GM12878 (cell line): ENCODE measurements at regions of chr6 and their contacts with region 1.

Region 1: DNA sequence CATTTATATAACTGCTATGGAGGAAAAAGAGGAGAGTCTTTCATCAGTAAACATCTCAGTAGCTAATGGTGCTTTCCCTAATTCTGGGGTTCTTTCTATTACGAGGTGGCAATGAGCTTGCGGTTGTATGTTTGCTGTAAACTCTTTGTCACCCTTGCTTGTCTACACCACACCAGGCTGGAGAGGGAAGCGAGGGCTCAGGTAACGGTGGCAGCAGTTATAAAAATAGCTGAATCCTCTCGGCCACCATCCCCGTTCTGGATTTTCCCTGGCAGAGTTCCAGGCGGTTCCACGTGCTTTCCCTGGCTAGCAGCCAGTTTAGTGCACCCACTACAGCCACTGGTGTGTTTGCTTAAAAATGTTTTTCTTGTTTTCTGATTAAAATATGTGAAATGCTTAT is 39.0 kb downstream of the MAS1 start:
- DNase-seq: peak; percentile 73
- ATAC-seq: peak; percentile 81
- H3K4me3 ChIP-seq: no peak overlapping the region
- H3K27ac ChIP-seq: peak overlapping the region; percentile 77
- H3K4me1 ChIP-seq: peaks cover 25% of the 10 kb centered on the region
- H3K27me3 ChIP-seq: no peaks in the 10 kb centered on the region
- CTCF ChIP-seq: no peak
- EP300 ChIP-seq: peak; percentile 61 to 90; a peak in 2 of 4 replicates
- POLR2A ChIP-seq: no peak
- RAD21 ChIP-seq: no peak

Region 2: DNA sequence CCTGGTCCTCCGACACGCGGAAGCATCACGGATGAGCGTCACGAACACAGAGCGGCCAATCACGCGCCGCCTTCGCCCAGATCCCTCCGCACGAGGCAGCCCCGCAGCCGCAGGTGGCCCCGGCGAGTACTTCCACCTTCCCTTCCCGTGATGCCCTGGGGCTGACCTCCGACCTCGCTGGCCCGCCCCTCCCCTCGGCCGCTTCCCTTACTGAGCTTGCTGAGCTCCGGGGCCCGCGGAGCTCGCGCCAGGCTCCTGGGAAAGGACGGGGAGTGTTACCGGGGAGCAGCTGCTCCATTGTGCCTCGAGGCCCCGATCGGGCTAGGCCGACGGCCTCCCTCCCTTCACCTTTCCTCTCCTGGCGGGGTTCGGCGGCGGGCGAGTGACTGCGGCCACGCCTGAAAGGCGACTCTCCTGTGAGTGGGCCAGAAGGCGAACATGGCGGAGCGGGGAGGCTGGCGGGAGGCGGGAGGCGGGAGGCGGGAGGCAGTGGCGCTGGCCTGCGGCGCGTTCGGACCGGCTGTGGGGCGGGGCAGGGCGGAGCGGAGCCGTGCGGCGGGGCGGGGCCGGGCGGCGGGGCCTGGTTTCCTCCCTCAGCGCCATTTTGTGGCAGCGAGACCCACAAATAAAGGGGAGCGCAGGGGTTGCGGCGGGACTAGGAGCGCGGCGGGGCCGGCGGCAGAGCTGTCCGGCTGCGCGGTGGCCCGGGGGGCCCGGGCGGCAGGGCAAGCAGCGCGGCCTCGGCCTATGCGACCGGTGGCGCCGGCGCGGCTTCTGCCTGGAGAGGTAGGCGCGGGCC is 202.7 kb before region 1 on chr6 and contains the start of gene WTAP:
- CTCF ChIA-PET with region 1: interaction called, 3 read pairs
- POLR2A ChIA-PET with region 1: interaction called, 7 read pairs
- RAD21 ChIA-PET with region 1: interaction called, 8 read pairs
- SMC1A ChIA-PET with region 1: interaction called, 3 read pairs
- in situ Hi-C with region 1: no loop called
- intact Hi-C with region 1: loop called (anchors 5 kb)
- DNase-seq: peak; percentile 89
- ATAC-seq: peak; percentile 86
- H3K4me3 ChIP-seq: peak within 1 kb of the TSS; percentile 91
- H3K27ac ChIP-seq: peak within 1 kb of the TSS; percentile 97
- H3K4me1 ChIP-seq: no peaks in the 10 kb centered on the region
- H3K27me3 ChIP-seq: no peaks in the 10 kb centered on the region
- CTCF ChIP-seq: no peak
- EP300 ChIP-seq: no peak
- POLR2A ChIP-seq: peak; percentile 95
- RAD21 ChIP-seq: no peak
- polyA plus RNA-seq, gene WTAP: 102 to 132 TPM

Region 3: GRCh38 chr6:159862103-159862502 is 67.7 kb before region 1 on chr6:
- CTCF ChIA-PET with region 1: interaction called, 11 read pairs
- POLR2A ChIA-PET with region 1: no interaction called
- RAD21 ChIA-PET with region 1: interaction called, 34 read pairs
- SMC1A ChIA-PET with region 1: interaction called, 36 read pairs
- in situ Hi-C with region 1: no loop called
- intact Hi-C with region 1: no loop called
- DNase-seq: no peak
- ATAC-seq: no peak
- H3K4me3 ChIP-seq: no peak overlapping the region
- H3K27ac ChIP-seq: no peak overlapping the region
- H3K4me1 ChIP-seq: no peaks in the 10 kb centered on the region
- H3K27me3 ChIP-seq: no peaks in the 10 kb centered on the region; a peak in 1 of 4 replicates
- CTCF ChIP-seq: no peak
- EP300 ChIP-seq: no peak
- POLR2A ChIP-seq: no peak
- RAD21 ChIP-seq: no peak

Region 4: GRCh38 chr6:159899994-159900745 is 29.6 kb before region 1 on chr6:
- CTCF ChIA-PET with region 1: interaction called, 3 read pairs
- POLR2A ChIA-PET with region 1: interaction called, 4 read pairs
- RAD21 ChIA-PET with region 1: interaction called, 5 read pairs
- SMC1A ChIA-PET with region 1: interaction called, 15 read pairs
- in situ Hi-C with region 1: no loop called
- intact Hi-C with region 1: loop called (anchors 2 kb)
- DNase-seq: no peak
- ATAC-seq: no peak
- H3K4me3 ChIP-seq: no peak overlapping the region
- H3K27ac ChIP-seq: no peak overlapping the region
- H3K4me1 ChIP-seq: peaks cover 13% of the 10 kb centered on the region
- H3K27me3 ChIP-seq: no peaks in the 10 kb centered on the region
- CTCF ChIP-seq: no peak
- EP300 ChIP-seq: no peak; a peak in 1 of 4 replicates
- POLR2A ChIP-seq: no peak
- RAD21 ChIP-seq: no peak

Region 5: GRCh38 chr6:159941286-159942113 is 11.7 kb after region 1 on chr6:
- CTCF ChIA-PET with region 1: interaction called, 11 read pairs
- POLR2A ChIA-PET with region 1: interaction called, 5 read pairs
- RAD21 ChIA-PET with region 1: interaction called, 9 read pairs
- SMC1A ChIA-PET with region 1: interaction called, 42 read pairs
- in situ Hi-C with region 1: no loop called
- intact Hi-C with region 1: no loop called
- DNase-seq: peak; percentile 55
- ATAC-seq: peak; percentile 98
- H3K4me3 ChIP-seq: no peak overlapping the region
- H3K27ac ChIP-seq: no peak overlapping the region
- H3K4me1 ChIP-seq: no peaks in the 10 kb centered on the region
- H3K27me3 ChIP-seq: no peaks in the 10 kb centered on the region
- CTCF ChIP-seq: peak; percentile 47 to 81 (median 56); a peak in 4 of 6 replicates
- EP300 ChIP-seq: no peak
- POLR2A ChIP-seq: no peak
- RAD21 ChIP-seq: peak; percentile 89

Region 6: GRCh38 chr6:159979136-159979874 is 49.5 kb after region 1 on chr6:
- CTCF ChIA-PET with region 1: interaction called, 7 read pairs
- POLR2A ChIA-PET with region 1: interaction called, 14 read pairs
- RAD21 ChIA-PET with region 1: interaction called, 29 read pairs
- SMC1A ChIA-PET with region 1: interaction called, 95 read pairs
- in situ Hi-C with region 1: no loop called
- intact Hi-C with region 1: no loop called
- DNase-seq: peak; percentile 75
- ATAC-seq: peak; percentile 70
- H3K4me3 ChIP-seq: peak overlapping the region; percentile 54
- H3K27ac ChIP-seq: peak overlapping the region; percentile 96
- H3K4me1 ChIP-seq: peaks cover 55% of the 10 kb centered on the region
- H3K27me3 ChIP-seq: no peaks in the 10 kb centered on the region
- CTCF ChIP-seq: 0 out of 6 replicates have a peak, but pooled peaks of 1 of the 3 experiments have one; percentile 2
- EP300 ChIP-seq: peak; percentile 71 to 85; a peak in 3 of 4 replicates
- POLR2A ChIP-seq: peak; percentile 44; the same call in 1 of the 2 replicates
- RAD21 ChIP-seq: no peak